Esophagus squamous epithelium (tissue), 5 donors: ENCODE measurements at regions of chr4 and their contacts with region 1.

Region 1: DNA sequence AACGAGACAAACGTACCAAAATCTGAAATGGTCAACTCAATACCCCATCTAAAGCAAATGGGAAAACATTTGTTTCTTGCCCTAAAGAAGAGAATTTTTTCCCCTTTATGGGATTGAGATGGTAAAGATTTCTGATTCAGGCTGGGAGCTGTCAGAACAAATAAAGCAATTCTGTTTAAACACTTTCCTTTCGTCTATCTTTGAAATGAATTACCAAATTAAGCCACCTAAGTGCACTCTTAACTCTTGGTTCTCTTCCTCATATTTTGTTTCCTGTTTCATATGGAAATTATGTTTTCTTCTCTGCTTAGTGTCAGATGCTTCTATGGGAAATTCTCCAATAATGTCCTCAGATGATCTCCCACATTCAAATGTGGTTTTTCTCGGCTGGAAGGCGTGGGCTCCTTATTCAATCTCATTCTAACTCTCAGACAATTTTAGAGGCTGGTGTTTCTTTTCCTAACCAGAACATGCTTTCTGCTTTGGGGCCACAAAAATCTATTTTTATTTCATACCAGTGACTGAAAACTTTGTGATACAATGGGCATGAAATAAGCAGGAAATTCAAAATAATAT is 50.3 kb upstream of the HPF1 start:
- DNase-seq: no peak
- H3K4me3 ChIP-seq: no peak overlapping the region
- H3K27ac ChIP-seq: no peak overlapping the region
- H3K4me1 ChIP-seq: no peaks in the 10 kb centered on the region
- H3K27me3 ChIP-seq: peaks cover 0 to 15% (median 0%) of the 10 kb centered on the region in 4 donors
- CTCF ChIP-seq: no peak
- POLR2A ChIP-seq: no peak

Region 2: GRCh38 chr4:170051402-170051801 is 243.4 kb after region 1 on chr4:
- intact Hi-C with region 1: loop called (anchors 5 kb)
- DNase-seq: no peak
- H3K4me3 ChIP-seq: no peak overlapping the region
- H3K27ac ChIP-seq: no peak overlapping the region
- H3K4me1 ChIP-seq: no peaks in the 10 kb centered on the region
- H3K27me3 ChIP-seq: peaks cover 0 to 7% (median 0%) of the 10 kb centered on the region in 4 donors
- CTCF ChIP-seq: no peak
- POLR2A ChIP-seq: no peak